ENCODE measurements at regions of chr2 and their contacts with region 1.

Region 1: GRCh38 chr2:176140513-176141317 is 10.6 kb upstream of the HOXD4 start:
- DNase-seq: peak; percentile 78
- H3K4me3 Mint-ChIP-seq: peak overlapping the region; percentile 14
- H3K27ac Mint-ChIP-seq: no peak overlapping the region
- H3K4me1 Mint-ChIP-seq: peaks cover 16% of the 10 kb centered on the region
- H3K27me3 Mint-ChIP-seq: peaks cover 99% of the 10 kb centered on the region

Region 2: DNA sequence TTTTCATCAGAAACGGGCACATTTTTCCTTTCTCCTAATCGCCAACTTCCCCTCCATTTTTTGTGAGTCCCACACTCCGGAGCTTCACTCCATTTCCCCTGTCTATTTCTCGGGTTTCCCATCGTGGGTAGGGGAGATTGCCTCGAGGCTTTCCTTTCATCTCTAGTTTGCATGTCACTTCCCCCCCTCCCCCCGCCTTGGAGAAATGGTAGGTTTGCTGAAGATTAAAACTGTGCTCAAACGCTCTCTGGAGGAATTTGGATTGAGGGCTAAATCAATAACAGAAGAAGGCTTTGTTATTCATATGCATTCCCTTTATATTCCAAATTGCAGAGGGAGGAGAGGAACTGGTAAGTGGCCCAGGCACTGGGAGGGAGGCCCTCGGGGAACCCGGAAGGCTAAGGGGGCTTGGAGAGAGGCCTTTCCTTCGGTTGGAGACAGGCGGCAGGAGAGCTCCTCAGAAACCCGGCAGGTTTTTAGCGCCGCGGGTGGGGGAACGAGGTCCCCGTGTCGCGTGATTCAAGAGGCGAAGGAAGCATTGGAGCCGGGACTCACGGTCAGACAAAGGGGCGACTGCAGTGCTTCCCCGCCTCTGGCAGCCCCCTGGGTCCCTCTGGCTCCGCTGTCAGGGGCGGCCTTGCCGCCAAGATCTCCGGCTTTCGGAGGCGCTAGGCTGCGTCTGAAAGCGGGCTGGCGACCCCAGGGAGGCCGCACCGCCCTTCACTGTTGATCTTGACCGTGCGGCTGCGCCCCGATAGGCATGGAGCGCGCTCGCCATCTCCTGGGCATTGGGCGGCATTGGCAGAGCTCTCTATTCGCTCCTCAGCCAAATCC is 43.5 kb before region 1 on chr2:
- CTCF ChIA-PET with region 1: interaction called, 10 read pairs
- DNase-seq: peak; percentile 69
- H3K4me3 Mint-ChIP-seq: peak overlapping the region; percentile 65
- H3K27ac Mint-ChIP-seq: no peak overlapping the region
- H3K4me1 Mint-ChIP-seq: peaks cover 25% of the 10 kb centered on the region
- H3K27me3 Mint-ChIP-seq: peaks cover 95% of the 10 kb centered on the region

Region 3: GRCh38 chr2:176174824-176175708 is 34.4 kb after region 1 on chr2:
- CTCF ChIA-PET with region 1: interaction called, 17 read pairs
- DNase-seq: no peak
- H3K4me3 Mint-ChIP-seq: no peak overlapping the region
- H3K27ac Mint-ChIP-seq: no peak overlapping the region
- H3K4me1 Mint-ChIP-seq: peaks cover 5% of the 10 kb centered on the region
- H3K27me3 Mint-ChIP-seq: peaks cover 100% of the 10 kb centered on the region

Region 4: GRCh38 chr2:176461809-176462382 is 321.2 kb after region 1 on chr2:
- CTCF ChIA-PET with region 1: interaction called, 140 read pairs
- DNase-seq: no peak
- H3K4me3 Mint-ChIP-seq: no peak overlapping the region
- H3K27ac Mint-ChIP-seq: no peak overlapping the region
- H3K4me1 Mint-ChIP-seq: no peaks in the 10 kb centered on the region
- H3K27me3 Mint-ChIP-seq: peaks cover 48% of the 10 kb centered on the region

Region 5: DNA sequence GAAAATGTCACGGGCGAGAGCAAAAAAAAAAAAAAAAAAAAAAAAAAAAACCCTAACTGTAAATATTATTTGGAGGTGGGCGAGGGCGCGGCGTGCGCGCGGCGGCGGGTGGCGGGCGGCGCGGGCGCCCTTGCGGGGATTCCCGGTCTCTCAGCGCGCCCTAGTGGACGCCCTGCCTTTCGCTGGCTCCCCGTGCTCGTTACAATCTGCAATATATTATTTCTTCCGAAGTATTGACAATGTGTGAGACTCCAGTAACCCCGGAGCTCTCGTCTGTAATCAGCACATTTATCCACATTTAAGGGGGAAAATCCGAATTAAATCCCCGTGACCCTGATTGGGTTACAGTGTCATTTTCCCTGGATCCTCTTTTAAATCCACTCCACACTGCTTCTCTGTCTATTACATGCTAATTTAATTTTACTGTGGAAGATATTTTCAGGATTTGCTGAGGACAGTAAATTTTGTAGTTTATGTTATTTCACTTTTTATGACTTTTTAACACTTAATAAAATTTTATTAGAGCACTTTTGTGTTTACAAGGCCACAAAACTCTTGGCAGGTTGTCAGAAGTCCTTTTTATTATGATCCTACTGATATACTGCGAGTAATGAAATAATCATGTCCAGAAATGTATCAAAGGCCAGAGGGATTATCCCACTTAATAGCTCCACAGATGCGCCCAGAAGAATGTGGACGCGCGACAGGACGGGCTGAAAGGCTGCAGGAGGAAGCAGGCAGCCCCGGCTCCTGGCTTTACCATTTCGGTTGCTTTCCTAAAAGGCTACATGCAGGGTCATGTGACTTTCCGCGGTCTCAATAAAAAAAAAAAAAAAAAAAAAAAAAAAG is 497.7 kb after region 1 on chr2:
- CTCF ChIA-PET with region 1: interaction called, 24 read pairs
- DNase-seq: peak; percentile 68
- H3K4me3 Mint-ChIP-seq: peak overlapping the region; percentile 33
- H3K27ac Mint-ChIP-seq: no peak overlapping the region
- H3K4me1 Mint-ChIP-seq: no peaks in the 10 kb centered on the region
- H3K27me3 Mint-ChIP-seq: peaks cover 60% of the 10 kb centered on the region